ENCODE measurements at regions of chr11 and their contacts with region 1.

Region 1: GRCh38 chr11:116732271-116733042 is 40.3 kb downstream of the BUD13 start:
- DNase-seq: peak; percentile 31
- H3K4me3 Mint-ChIP-seq: no peak overlapping the region
- H3K27ac Mint-ChIP-seq: no peak overlapping the region
- H3K4me1 Mint-ChIP-seq: peaks cover 12% of the 10 kb centered on the region
- H3K27me3 Mint-ChIP-seq: no peaks in the 10 kb centered on the region

Region 2: DNA sequence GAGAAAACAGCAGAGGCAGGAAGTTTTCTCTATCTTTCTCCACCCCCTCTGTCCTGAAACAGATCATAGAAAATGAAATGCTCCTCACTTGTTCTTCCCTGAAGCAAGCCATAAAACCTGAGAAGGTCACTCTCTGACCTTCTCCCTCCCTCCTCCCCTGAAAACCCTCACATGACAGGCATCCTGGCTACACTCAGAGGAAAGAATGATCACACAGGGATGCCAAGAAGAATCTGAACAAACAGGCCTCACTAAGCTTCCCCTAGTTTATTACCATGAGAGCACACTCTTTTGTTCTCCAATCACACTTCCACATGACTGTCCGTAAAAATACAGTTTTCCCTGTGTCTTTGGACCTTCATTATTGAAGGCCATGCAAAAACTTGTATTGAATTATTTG is 259.8 kb before region 1 on chr11:
- intact Hi-C with region 1: no loop called
- DNase-seq: no peak
- H3K4me3 Mint-ChIP-seq: no peak overlapping the region
- H3K27ac Mint-ChIP-seq: no peak overlapping the region
- H3K4me1 Mint-ChIP-seq: no peaks in the 10 kb centered on the region
- H3K27me3 Mint-ChIP-seq: peaks cover 3% of the 10 kb centered on the region

Region 3: DNA sequence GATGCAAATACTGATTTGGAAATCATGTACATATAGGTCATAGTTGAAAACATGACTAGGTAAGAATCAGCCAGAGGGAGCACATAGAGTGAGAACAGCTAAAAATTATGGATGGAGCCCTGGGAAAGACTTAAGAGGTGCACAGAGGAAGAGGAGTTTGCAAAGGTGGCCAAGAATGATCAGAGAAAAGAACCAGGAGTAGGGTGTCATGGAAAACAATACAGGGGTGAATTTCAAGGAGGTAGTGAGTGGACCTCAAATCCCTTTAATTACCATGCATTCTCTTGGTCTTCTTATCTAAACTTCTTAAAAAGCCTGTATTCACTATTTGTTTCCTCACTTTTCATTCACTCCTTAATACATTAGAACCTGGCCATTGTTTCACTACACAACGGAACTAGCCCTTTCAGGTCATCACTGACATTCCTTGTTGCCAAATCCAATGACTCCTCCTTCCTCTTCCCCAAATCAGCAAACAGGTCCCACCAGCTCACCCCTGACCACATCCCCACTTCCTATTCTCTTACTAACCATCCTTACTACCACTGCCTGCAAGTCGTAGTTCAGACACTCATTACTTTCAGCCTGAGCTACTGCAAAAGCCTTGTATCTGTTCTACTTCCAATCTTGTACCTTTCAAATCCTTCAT is 17.7 kb after region 1 on chr11:
- intact Hi-C with region 1: no loop called
- DNase-seq: no peak
- H3K4me3 Mint-ChIP-seq: no peak overlapping the region
- H3K27ac Mint-ChIP-seq: no peak overlapping the region
- H3K4me1 Mint-ChIP-seq: peaks cover 4% of the 10 kb centered on the region
- H3K27me3 Mint-ChIP-seq: no peaks in the 10 kb centered on the region

Region 4: DNA sequence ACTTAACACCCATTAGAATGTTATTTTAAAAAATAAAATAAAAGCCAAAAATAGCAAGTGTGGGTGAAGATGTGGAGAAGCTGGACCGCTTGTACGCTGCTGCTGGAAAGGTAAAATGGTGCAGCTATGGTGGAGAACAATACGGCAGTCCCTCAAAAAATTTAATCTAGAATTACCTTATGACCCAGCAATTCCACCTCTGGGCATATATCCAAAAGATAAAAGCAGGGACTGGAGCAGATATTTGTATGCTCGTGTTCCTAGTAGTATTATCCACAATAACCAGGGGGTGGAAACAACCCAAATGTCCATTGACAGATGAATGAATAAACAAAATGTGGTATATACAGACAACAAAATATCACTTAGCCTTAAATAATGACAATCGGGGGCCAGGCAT is 65.4 kb after region 1 on chr11:
- intact Hi-C with region 1: no loop called
- DNase-seq: no peak
- H3K4me3 Mint-ChIP-seq: no peak overlapping the region
- H3K27ac Mint-ChIP-seq: no peak overlapping the region
- H3K4me1 Mint-ChIP-seq: no peaks in the 10 kb centered on the region
- H3K27me3 Mint-ChIP-seq: peaks cover 22% of the 10 kb centered on the region

Region 5: GRCh38 chr11:116835791-116836631 is 103.6 kb after region 1 on chr11:
- intact Hi-C with region 1: loop called (anchors 1 kb)
- DNase-seq: peak; percentile 73
- H3K4me3 Mint-ChIP-seq: peak overlapping the region; percentile 54
- H3K27ac Mint-ChIP-seq: no peak overlapping the region
- H3K4me1 Mint-ChIP-seq: peaks cover 5% of the 10 kb centered on the region
- H3K27me3 Mint-ChIP-seq: peaks cover 4% of the 10 kb centered on the region

Region 6: DNA sequence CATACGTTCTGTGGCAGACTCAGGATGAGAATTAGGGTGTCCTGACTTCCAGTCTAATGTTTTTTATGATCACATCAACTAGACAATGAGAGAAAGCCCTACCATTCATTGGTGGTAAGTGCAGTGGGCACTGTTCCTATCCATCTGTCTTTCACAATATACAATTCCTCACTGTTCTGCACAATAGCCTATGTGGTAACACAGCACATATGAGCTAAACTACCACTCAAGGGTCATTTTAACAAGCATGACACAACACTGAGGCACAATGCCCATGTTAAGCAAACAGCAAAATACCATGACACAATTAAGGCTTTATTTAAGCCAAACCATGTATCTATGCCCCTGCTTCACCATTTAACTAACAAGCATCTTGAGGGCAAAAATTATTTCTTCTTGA is 313.5 kb after region 1 on chr11:
- intact Hi-C with region 1: no loop called
- DNase-seq: no peak
- H3K4me3 Mint-ChIP-seq: no peak overlapping the region
- H3K27ac Mint-ChIP-seq: no peak overlapping the region
- H3K4me1 Mint-ChIP-seq: peaks cover 36% of the 10 kb centered on the region
- H3K27me3 Mint-ChIP-seq: no peaks in the 10 kb centered on the region

Measured in activated T-helper 1 cell treated with anti-CD3 and anti-CD28 coated beads, Interleukin-12 subunit alpha, Interleukin-12 subunit beta, Interleukin-2, Interleukin-4 antibody, amounts not matched to agents 30 ng/mL and 10 ng/mL and 1 ng/mL, durations not matched to agents 14 hours and 24 hours and 36 hours (primary cell).